ENCODE measurements at regions of chr2 and their contacts with region 1.

Region 1: DNA sequence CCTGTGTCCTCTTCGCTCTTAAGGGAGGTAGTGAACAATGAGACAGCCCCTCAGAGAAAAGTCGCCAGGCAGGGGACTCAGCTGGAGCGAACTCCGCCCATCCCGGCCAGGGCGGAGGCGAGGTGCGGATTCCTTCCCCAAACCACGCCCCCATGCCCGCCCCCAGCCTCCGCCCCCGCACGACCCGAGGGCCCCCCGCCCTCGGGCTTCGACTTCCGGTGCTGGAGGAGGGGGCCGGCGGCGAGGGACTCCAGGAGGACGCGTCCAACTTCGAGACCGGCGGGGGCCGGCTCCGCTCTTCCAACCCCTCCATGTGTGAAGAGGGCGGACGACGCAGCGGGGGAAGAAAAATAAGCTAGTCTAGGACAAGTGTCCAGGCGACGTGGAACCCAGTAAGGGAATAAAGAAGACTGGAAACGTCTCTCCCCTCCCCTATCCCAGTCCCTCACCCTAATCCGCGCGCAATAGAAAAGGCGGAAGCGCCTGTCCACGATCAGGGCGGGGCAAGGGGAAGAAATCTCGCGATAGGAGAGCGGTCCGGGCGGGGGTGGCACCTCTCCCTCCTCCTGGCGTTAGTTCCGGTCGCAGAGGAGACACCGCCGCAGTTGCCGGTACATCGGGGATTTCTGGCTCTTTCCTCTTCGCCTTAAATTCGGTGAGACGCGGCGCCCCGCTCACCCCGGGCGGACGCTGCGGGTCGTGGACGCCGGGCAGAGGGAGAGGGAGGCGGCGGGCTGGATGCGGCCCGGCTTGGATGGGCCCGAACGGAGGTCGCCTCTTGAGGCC is at the start of gene BZW1:
- DNase-seq: peak; percentile 97 to 98 (median 97)
- ATAC-seq: peak; percentile 93 to 95 (median 94)
- H3K4me3 ChIP-seq: peak within 1 kb of the TSS; percentile 60 to 99 (median 96)
- H3K27ac ChIP-seq: peak within 1 kb of the TSS; percentile 93 to 99 (median 98)
- H3K4me1 ChIP-seq: peaks cover 6 to 48% (median 33%) of the 10 kb centered on the region in 12 donors
- H3K27me3 ChIP-seq: no peaks in the 10 kb centered on the region
- CTCF ChIP-seq: no peak
- POLR2A ChIP-seq: peak; percentile 49 to 91
- total RNA-seq, gene BZW1: 60.0 to 147 (median 87.3) TPM

Region 2: DNA sequence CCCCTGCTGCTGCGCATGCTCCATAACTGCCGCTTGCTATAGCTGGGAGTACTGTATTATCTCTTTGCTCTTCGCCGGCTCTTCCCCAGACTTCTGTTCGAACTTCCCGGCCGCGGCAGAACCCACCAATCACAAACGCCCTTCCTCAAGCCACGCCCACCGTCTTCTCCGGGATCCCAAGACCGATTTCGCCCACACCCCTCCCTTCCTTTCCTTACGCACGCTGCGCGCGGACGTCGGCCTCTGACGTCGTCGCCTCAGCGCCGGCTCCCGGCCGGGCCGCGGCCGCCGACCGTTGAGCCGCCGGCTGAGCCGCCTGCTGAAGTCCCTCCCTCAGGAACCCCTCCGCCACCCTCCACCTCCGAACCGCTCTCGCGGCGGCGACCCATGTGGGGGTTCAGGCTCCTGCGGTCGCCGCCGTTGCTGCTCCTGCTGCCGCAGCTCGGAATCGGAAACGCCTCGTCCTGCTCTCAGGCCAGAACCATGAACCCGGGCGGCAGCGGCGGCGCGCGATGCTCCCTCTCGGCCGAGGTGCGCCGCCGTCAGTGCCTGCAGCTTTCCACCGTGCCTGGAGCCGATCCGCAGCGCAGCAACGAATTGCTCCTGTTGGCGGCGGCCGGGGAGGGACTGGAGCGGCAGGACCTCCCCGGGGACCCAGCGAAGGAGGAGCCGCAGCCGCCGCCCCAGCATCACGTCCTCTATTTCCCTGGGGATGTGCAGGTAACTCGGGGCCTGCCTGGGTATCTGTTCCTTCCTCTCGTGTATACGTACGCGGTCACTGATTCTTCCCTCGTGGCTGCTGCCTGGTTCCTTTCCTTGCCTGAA is 900.3 kb before region 1 on chr2 and contains the start of gene C2orf69:
- intact Hi-C with region 1: loop called in 1 of 10 experiments (anchors 5 kb)
- DNase-seq: peak; percentile 96 to 97 (median 96)
- ATAC-seq: peak; percentile 98 to 99 (median 99)
- H3K4me3 ChIP-seq: peak within 1 kb of the TSS; percentile 59 to 99 (median 89)
- H3K27ac ChIP-seq: peak within 1 kb of the TSS; percentile 85 to 99 (median 96)
- H3K4me1 ChIP-seq: peaks cover 0 to 29% (median 22%) of the 10 kb centered on the region in 12 donors
- H3K27me3 ChIP-seq: no peaks in the 10 kb centered on the region
- CTCF ChIP-seq: peak in 1 of 12 donors; percentile 16
- POLR2A ChIP-seq: peak; percentile 46 to 86
- total RNA-seq, gene C2orf69: 7.2 to 10.6 (median 8.7) TPM

Region 3: DNA sequence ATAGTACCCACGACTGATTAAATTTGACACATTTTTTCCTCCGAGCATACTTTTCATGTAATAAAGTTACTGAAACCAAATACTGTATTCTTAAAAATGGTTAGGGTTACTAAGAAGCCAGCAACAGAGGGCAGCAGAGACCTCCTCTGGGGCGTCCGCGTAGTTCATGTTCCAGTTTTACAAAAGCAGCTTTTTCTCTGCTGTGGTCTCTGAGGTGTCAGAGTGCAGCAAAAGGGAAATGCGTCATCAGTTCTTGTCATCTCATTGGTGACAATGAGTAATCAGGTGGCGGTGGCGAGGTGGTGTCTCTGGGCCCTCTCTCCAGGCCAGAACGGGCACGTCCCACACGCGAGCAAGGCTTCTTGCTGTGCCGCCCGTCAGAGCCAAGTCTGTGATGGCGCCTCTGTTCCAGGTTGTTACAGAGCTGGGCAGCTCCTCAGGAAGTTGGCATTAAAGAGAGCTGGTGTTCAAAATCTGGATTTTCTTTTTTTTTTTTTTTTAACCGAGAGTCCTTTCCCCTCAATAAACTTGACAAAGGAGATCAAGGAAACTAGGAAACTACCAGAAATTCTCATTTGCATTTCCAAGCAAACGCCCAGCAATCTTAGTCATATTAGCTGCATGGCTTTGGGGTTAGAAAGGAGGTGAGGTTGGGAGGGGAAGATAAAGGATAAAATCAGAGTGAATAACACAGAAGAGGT is 98.4 kb before region 1 on chr2:
- intact Hi-C with region 1: loop called (anchors 1 to 5 kb)
- DNase-seq: peak; percentile 81 to 90 (median 89)
- ATAC-seq: peak; percentile 91 to 99 (median 98)
- H3K4me3 ChIP-seq: peak overlapping the region in 10 of 12 donors; percentile 26 to 58 (median 46)
- H3K27ac ChIP-seq: peak overlapping the region in 11 of 12 donors; percentile 23 to 84 (median 61)
- H3K4me1 ChIP-seq: peaks cover 0 to 7% (median 1%) of the 10 kb centered on the region in 12 donors
- H3K27me3 ChIP-seq: peaks cover 0 to 3% (median 0%) of the 10 kb centered on the region in 9 donors
- CTCF ChIP-seq: peak; percentile 60 to 92 (median 84)
- POLR2A ChIP-seq: peak in 1 of 2 donors; percentile 48

Region 4: GRCh38 chr2:200856806-200857205 is 45.3 kb after region 1 on chr2:
- intact Hi-C with region 1: loop called in 6 of 10 experiments (anchors 2 to 5 kb)
- DNase-seq: no peak
- ATAC-seq: no peak
- H3K4me3 ChIP-seq: no peak overlapping the region
- H3K27ac ChIP-seq: no peak overlapping the region
- H3K4me1 ChIP-seq: peaks cover 0 to 61% (median 41%) of the 10 kb centered on the region in 12 donors
- H3K27me3 ChIP-seq: no peaks in the 10 kb centered on the region
- CTCF ChIP-seq: no peak
- POLR2A ChIP-seq: no peak

Region 5: GRCh38 chr2:200864176-200864976 is 52.8 kb after region 1 on chr2 and contains the start of gene CLK1:
- intact Hi-C with region 1: loop called in 9 of 10 experiments (anchors 1 to 5 kb)
- DNase-seq: peak; percentile 97 to 99 (median 98)
- ATAC-seq: peak; percentile 88 to 95 (median 94)
- H3K4me3 ChIP-seq: peak within 1 kb of the TSS; percentile 67 to 100 (median 96)
- H3K27ac ChIP-seq: peak within 1 kb of the TSS; percentile 98 to 100 (median 100)
- H3K4me1 ChIP-seq: peaks cover 0 to 52% (median 25%) of the 10 kb centered on the region in 12 donors
- H3K27me3 ChIP-seq: no peaks in the 10 kb centered on the region
- CTCF ChIP-seq: no peak
- POLR2A ChIP-seq: peak; percentile 87 to 99
- total RNA-seq, gene CLK1: 28.6 to 59.5 (median 39.0) TPM

Region 6: GRCh38 chr2:200888704-200889625 is 77.4 kb after region 1 on chr2 and contains the starts of genes NIF3L1 and PPIL3:
- intact Hi-C with region 1: loop called in 2 of 10 experiments (anchors 2 kb)
- DNase-seq: peak; percentile 95 to 97 (median 97)
- ATAC-seq: peak; percentile 96 to 98 (median 97)
- H3K4me3 ChIP-seq: peak within 1 kb of the TSS; percentile 57 to 89 (median 72)
- H3K27ac ChIP-seq: peak within 1 kb of the TSS; percentile 65 to 97 (median 92)
- H3K4me1 ChIP-seq: peaks cover 0 to 30% (median 13%) of the 10 kb centered on the region in 12 donors
- H3K27me3 ChIP-seq: no peaks in the 10 kb centered on the region
- CTCF ChIP-seq: no peak
- POLR2A ChIP-seq: peak in 1 of 2 donors; percentile 48
- total RNA-seq, gene NIF3L1: 16.6 to 27.1 (median 21.6) TPM
- total RNA-seq, gene PPIL3: 11.3 to 27.7 (median 22.2) TPM